PC-3 (cell line): ENCODE measurements at regions of chr9 and their contacts with region 1.

Region 1: GRCh38 chr9:71683598-71684235 is 84.6 kb downstream of the CEMIP2 start:
- DNase-seq: peak; percentile 46
- ATAC-seq: peak; percentile 15; the same call in 1 of the 2 replicates
- H3K4me3 ChIP-seq: no peak overlapping the region
- H3K27ac ChIP-seq: no peak overlapping the region
- H3K4me1 ChIP-seq: peaks cover 69% of the 10 kb centered on the region
- H3K27me3 ChIP-seq: no peaks in the 10 kb centered on the region
- CTCF ChIP-seq: peak; percentile 47

Region 2: GRCh38 chr9:70852711-70853240 is 830.9 kb before region 1 on chr9:
- CTCF ChIA-PET with region 1: no interaction called
- POLR2A ChIA-PET with region 1: no interaction called
- intact Hi-C with region 1: no loop called
- DNase-seq: no peak
- ATAC-seq: no peak
- H3K4me3 ChIP-seq: no peak overlapping the region
- H3K27ac ChIP-seq: no peak overlapping the region
- H3K4me1 ChIP-seq: no peaks in the 10 kb centered on the region
- H3K27me3 ChIP-seq: peaks cover 4% of the 10 kb centered on the region; the same call in 1 of the 2 replicates
- CTCF ChIP-seq: no peak

Region 3: DNA sequence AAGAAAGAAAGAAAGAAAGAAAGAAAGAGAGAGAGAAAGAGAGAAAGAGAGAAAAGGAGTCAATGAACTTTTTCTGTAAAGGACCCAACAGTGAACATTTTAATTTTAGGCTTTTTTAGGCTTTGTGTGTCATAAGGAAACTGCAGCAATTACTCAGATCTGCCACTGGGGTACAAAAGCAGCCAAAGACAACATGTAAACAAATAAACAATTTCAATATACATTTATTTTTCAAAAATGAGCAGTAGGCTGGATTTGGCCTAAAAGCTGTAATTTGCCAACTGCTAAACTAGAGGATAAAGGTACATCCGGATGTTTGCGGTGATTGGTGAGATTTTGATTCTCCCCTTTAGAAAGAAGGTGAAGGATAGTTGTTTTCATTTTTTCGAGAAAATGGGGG is 59.0 kb before region 1 on chr9:
- CTCF ChIA-PET with region 1: interaction called, 3 read pairs
- POLR2A ChIA-PET with region 1: interaction called, 15 read pairs
- intact Hi-C with region 1: loop called (anchors 1 kb)
- DNase-seq: no peak
- ATAC-seq: no peak
- H3K4me3 ChIP-seq: no peak overlapping the region
- H3K27ac ChIP-seq: no peak overlapping the region
- H3K4me1 ChIP-seq: peaks cover 22% of the 10 kb centered on the region
- H3K27me3 ChIP-seq: no peaks in the 10 kb centered on the region
- CTCF ChIP-seq: peak; percentile 28; the same call in 1 of the 2 replicates

Region 4: GRCh38 chr9:71647094-71647591 is 36.6 kb before region 1 on chr9:
- CTCF ChIA-PET with region 1: no interaction called
- POLR2A ChIA-PET with region 1: interaction called, 6 read pairs
- intact Hi-C with region 1: loop called (anchors 5 kb)
- DNase-seq: peak; percentile 79
- ATAC-seq: peak; percentile 78
- H3K4me3 ChIP-seq: peak overlapping the region; percentile 11; the same call in 1 of the 2 replicates
- H3K27ac ChIP-seq: no peak overlapping the region
- H3K4me1 ChIP-seq: peaks cover 24% of the 10 kb centered on the region
- H3K27me3 ChIP-seq: no peaks in the 10 kb centered on the region
- CTCF ChIP-seq: no peak